Heart right ventricle (tissue), 16 donors: ENCODE measurements at regions of chr3 and their contacts with region 1.

Region 1: GRCh38 chr3:25503898-25504298 is 75.8 kb downstream of the RARB start:
- DNase-seq: no peak
- ATAC-seq: peak in 1 of 8 donors; percentile 19
- H3K4me3 ChIP-seq: no peak overlapping the region
- H3K27ac ChIP-seq: peak overlapping the region in 3 of 10 donors; percentile 23 to 48 (median 27)
- H3K4me1 ChIP-seq: peaks cover 5 to 66% (median 32%) of the 10 kb centered on the region in 9 donors
- H3K27me3 ChIP-seq: no peaks in the 10 kb centered on the region
- CTCF ChIP-seq: no peak

Region 2: DNA sequence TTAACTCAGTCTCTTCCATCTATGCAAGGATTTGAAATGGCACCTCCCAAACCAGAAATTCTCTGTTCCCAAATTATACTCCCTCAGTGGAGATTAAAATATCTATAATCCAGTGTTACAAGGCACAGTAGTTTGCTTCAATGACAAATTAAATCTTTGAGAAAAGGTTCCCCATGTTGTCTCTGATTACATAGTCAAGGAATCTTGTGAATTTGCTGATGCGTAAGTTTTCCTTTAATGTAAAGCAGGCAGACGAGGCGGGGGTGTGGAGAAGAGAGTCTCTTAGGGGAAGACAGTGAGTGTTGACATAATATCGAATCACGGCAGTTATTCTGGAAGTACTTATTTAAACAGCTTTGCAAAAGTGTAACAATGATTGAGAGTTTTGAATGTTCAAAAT is 312.2 kb before region 1 on chr3:
- intact Hi-C with region 1: no loop called
- DNase-seq: no peak
- ATAC-seq: no peak
- H3K4me3 ChIP-seq: no peak overlapping the region
- H3K27ac ChIP-seq: no peak overlapping the region
- H3K4me1 ChIP-seq: no peaks in the 10 kb centered on the region
- H3K27me3 ChIP-seq: no peaks in the 10 kb centered on the region
- CTCF ChIP-seq: no peak

Region 3: GRCh38 chr3:25257026-25257425 is 246.9 kb before region 1 on chr3:
- intact Hi-C with region 1: loop called in 1 of 10 experiments (anchors 5 kb)
- DNase-seq: no peak
- ATAC-seq: no peak
- H3K4me3 ChIP-seq: no peak overlapping the region
- H3K27ac ChIP-seq: no peak overlapping the region
- H3K4me1 ChIP-seq: no peaks in the 10 kb centered on the region
- H3K27me3 ChIP-seq: no peaks in the 10 kb centered on the region
- CTCF ChIP-seq: no peak

Region 4: DNA sequence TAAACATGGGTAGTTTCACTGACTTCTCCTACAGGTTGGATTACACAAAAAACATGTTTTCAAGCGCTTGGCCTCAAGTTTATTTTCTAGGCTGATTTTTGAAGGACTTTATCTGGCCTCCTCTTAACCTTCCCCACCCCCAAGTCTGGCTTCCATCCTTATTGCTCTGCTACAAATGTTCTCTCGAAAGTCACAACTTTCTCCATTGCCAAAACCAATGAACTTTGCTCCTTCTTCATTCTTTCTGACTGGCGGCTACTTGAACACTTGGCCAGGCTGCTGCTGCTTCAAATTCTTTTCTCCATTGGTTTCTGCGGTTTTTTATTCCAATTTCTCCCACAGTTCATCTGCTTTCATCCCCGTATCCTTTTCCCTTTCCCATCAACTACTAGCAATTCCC is 54.2 kb after region 1 on chr3:
- intact Hi-C with region 1: no loop called
- DNase-seq: peak in 1 of 2 donors; percentile 35
- ATAC-seq: peak in 7 of 8 donors; percentile 38 to 65 (median 46)
- H3K4me3 ChIP-seq: no peak overlapping the region
- H3K27ac ChIP-seq: peak overlapping the region in 3 of 10 donors; percentile 3 to 61 (median 52)
- H3K4me1 ChIP-seq: peaks cover 8 to 72% (median 55%) of the 10 kb centered on the region in 9 donors
- H3K27me3 ChIP-seq: no peaks in the 10 kb centered on the region
- CTCF ChIP-seq: no peak

Region 5: GRCh38 chr3:26522919-26523318 is 1019.0 kb after region 1 on chr3:
- intact Hi-C with region 1: no loop called
- DNase-seq: no peak
- ATAC-seq: no peak
- H3K4me3 ChIP-seq: no peak overlapping the region
- H3K27ac ChIP-seq: no peak overlapping the region
- H3K4me1 ChIP-seq: no peaks in the 10 kb centered on the region
- H3K27me3 ChIP-seq: no peaks in the 10 kb centered on the region
- CTCF ChIP-seq: no peak